IMR-90 (cell line): ENCODE measurements at regions of chr15 and their contacts with region 1.

Region 1: DNA sequence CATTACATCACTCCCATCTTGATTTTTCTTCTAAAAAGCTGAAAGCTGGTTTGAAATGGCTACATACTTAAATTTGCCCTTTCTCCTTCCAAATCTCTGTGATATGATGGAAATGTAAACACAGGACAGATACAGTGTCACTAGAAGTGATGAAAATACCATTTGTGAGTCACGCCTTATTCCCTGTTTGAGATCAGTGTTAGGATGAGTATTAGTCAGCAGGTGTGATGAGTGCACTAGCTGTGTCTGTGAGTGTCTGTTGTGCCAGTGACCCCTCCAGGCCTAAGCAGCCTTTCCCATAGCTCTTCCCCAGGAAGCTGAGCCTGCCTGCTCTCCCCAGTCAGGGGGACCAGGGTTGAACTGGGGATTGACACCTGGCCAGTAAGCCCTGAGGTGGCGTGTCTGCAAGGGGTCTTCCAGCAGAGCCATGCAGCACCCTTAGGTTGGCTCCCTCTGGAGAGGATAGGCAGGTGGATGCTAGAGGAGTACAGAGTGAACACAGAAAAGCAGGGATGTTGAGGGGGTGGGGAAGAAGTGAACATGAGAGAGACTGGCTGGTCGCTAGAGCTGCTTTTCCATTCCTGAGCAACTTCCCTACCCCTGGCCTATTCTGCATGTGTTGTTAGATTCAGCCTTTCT is 92.0 kb downstream of the PDE8A start:
- DNase-seq: peak; percentile 42
- ATAC-seq: no peak; the same call in 1 of the 2 replicates
- H3K4me3 ChIP-seq: no peak overlapping the region
- H3K27ac ChIP-seq: no peak overlapping the region
- H3K4me1 ChIP-seq: peaks cover 3% of the 10 kb centered on the region; the same call in 1 of the 2 replicates
- H3K27me3 ChIP-seq: no peaks in the 10 kb centered on the region
- CTCF ChIP-seq: no peak
- POLR2A ChIP-seq: no peak
- RAD21 ChIP-seq: no peak

Region 2: GRCh38 chr15:83904107-83905040 is 1169.3 kb before region 1 on chr15:
- CTCF ChIA-PET with region 1: no interaction called
- POLR2A ChIA-PET with region 1: no interaction called
- dilution Hi-C with region 1: no loop called
- in situ Hi-C with region 1: no loop called
- intact Hi-C with region 1: no loop called
- DNase-seq: peak; percentile 59
- ATAC-seq: peak; percentile 80
- H3K4me3 ChIP-seq: no peak overlapping the region
- H3K27ac ChIP-seq: no peak overlapping the region
- H3K4me1 ChIP-seq: peaks cover 3% of the 10 kb centered on the region; the same call in 1 of the 2 replicates
- H3K27me3 ChIP-seq: peaks cover 3% of the 10 kb centered on the region; the same call in 1 of the 2 replicates
- CTCF ChIP-seq: no peak
- POLR2A ChIP-seq: no peak
- RAD21 ChIP-seq: no peak

Region 3: GRCh38 chr15:84810073-84810840 is 263.4 kb before region 1 on chr15:
- CTCF ChIA-PET with region 1: no interaction called
- POLR2A ChIA-PET with region 1: no interaction called
- dilution Hi-C with region 1: no loop called
- in situ Hi-C with region 1: no loop called
- intact Hi-C with region 1: no loop called
- DNase-seq: peak; percentile 62
- ATAC-seq: peak; percentile 75
- H3K4me3 ChIP-seq: no peak overlapping the region
- H3K27ac ChIP-seq: no peak overlapping the region
- H3K4me1 ChIP-seq: peaks cover 2% of the 10 kb centered on the region; the same call in 1 of the 2 replicates
- H3K27me3 ChIP-seq: no peaks in the 10 kb centered on the region
- CTCF ChIP-seq: no peak
- POLR2A ChIP-seq: no peak
- RAD21 ChIP-seq: no peak

Region 4: DNA sequence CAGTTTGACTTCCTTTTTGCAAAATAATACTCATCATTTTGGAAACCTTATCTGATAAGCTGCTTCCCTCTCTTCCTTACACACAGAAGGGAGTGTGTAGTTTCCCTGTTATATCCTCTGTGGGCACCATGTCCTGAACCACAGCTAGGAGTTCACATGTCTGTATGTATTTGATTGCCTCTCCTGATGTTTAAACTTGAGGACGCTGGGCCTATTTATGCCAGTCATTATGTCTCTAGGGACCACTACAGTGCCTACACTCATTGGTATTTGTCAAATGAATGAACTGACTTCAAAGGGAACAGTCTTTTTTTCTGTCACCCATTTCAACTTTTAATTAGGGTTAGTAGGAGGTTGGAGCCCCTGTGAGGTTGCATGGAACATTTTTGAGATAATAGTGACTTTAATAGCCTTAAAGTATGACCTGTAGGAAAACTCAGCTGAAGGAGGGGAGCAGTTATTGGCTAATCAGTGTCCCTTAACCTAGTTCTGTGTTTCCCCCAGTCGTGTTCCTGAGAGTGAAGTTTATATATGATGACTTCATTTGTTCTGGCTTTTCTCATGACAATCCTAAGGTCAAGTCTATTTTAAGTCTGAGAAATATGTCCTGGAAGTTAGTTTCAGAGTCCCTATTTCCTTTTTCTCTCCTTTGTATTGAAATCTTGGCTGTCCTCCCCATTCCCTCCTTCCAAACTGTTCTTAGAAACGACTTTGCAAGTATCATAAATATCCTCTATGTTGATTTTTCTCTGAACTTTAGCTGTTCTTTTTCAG is 63.1 kb before region 1 on chr15:
- CTCF ChIA-PET with region 1: no interaction called
- POLR2A ChIA-PET with region 1: no interaction called
- dilution Hi-C with region 1: no loop called
- in situ Hi-C with region 1: loop called (anchors 10 kb)
- intact Hi-C with region 1: no loop called
- DNase-seq: no peak
- ATAC-seq: no peak
- H3K4me3 ChIP-seq: no peak overlapping the region
- H3K27ac ChIP-seq: no peak overlapping the region
- H3K4me1 ChIP-seq: peaks cover 21% of the 10 kb centered on the region
- H3K27me3 ChIP-seq: no peaks in the 10 kb centered on the region
- CTCF ChIP-seq: no peak
- POLR2A ChIP-seq: no peak
- RAD21 ChIP-seq: no peak